ENCODE measurements at regions of chr16 and their contacts with region 1.

Region 1: DNA sequence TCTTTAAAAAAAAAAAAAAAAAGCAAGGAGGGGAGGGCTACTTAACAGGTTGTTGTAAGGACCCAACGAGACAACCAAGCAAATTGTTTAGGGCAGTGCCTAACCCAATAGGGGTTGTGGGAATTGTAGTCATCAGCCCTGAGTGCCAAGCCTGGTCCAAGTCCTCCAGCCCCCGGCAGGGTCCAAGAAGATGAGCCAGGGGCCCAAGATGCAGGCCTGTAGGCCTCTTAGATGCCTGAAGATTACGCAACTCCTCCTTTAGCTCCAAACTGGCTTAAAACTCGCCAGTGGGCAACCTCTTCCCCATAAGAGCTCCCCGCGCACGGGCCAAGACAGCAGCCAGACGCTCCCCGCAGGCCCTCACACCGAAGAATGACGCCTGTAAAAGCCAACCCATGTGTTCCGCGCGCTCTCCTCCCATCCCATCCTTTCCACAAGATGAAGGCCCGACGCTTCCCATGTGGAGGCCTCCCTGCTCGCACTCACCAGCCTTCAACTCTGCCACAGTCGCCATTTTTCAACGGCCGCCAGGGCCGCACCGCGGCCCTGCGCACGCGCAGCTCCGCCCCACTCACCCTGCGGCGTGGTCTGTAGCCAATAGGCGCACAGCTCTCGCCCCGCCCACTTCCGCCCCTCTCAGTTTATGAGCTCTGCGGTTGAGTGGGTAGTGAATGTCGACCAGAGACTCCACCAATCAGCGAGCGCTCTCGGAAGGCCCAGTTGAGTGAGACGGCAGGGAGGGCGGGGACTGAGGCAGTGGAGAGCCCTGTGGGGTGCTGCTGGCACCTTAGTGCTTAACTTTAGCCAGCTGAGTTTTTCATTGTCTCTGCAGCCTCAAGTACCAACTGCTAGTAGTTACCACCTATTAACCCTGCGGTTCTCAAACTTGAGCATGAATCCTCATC is at the start of gene CEP20:
- DNase-seq: peak; percentile 97 to 100
- H3K4me3 ChIP-seq: peak within 1 kb of the TSS; percentile 90
- H3K27ac ChIP-seq: peak within 1 kb of the TSS; percentile 65
- H3K4me1 ChIP-seq: peaks cover 30% of the 10 kb centered on the region
- H3K27me3 ChIP-seq: no peaks in the 10 kb centered on the region
- CTCF ChIP-seq: no peak
- total RNA-seq, gene CEP20: 93.4 and 125 TPM in 2 replicates

Region 2: GRCh38 chr16:15907863-15908478 is 19.6 kb after region 1 on chr16:
- CTCF ChIA-PET with region 1: no interaction called
- POLR2A ChIA-PET with region 1: interaction called, 31 read pairs
- intact Hi-C with region 1: no loop called
- DNase-seq: peak; percentile 25 to 50
- H3K4me3 ChIP-seq: no peak overlapping the region
- H3K27ac ChIP-seq: no peak overlapping the region
- H3K4me1 ChIP-seq: 0 out of 2 replicates have a peak, but pooled peaks cover 2% of the 10 kb centered on the region
- H3K27me3 ChIP-seq: no peaks in the 10 kb centered on the region
- CTCF ChIP-seq: no peak

Region 3: GRCh38 chr16:15966420-15967222 is 78.3 kb after region 1 on chr16:
- CTCF ChIA-PET with region 1: no interaction called
- POLR2A ChIA-PET with region 1: interaction called, 14 read pairs
- intact Hi-C with region 1: no loop called
- DNase-seq: peak; percentile 83 to 88
- H3K4me3 ChIP-seq: no peak overlapping the region; the same call in 1 of the 2 replicates
- H3K27ac ChIP-seq: peak overlapping the region; percentile 73
- H3K4me1 ChIP-seq: peaks cover 57% of the 10 kb centered on the region
- H3K27me3 ChIP-seq: no peaks in the 10 kb centered on the region
- CTCF ChIP-seq: no peak

Region 4: DNA sequence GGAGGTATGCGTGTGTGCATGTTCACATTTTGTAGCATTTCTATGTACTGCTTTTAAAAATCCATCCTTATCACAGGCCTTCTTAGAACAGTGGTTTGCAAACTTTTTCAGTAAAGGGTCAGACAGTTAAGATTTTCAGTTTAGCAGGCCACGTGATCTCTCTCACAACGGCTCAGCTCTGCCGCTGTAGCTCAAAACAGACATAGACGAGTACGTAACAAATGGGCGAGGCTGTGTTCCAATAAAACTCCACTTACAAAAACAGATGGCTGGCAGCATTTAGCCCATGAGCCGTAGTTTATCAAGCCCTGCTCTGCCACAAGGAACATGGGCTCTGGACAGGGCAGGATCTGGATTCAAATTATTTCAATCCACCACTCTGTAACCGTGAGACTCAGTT is 1440.6 kb after region 1 on chr16:
- CTCF ChIA-PET with region 1: no interaction called
- POLR2A ChIA-PET with region 1: no interaction called
- intact Hi-C with region 1: no loop called
- DNase-seq: no peak
- H3K4me3 ChIP-seq: no peak overlapping the region
- H3K27ac ChIP-seq: no peak overlapping the region
- H3K4me1 ChIP-seq: no peaks in the 10 kb centered on the region
- H3K27me3 ChIP-seq: peaks cover 10% of the 10 kb centered on the region
- CTCF ChIP-seq: no peak